Activated naive CD8-positive, alpha-beta T cell treated with anti-CD3 and anti-CD28 coated beads, Interleukin-2, amount 10 ng/mL, durations not matched to agents 7 days and 5 days (primary cell): ENCODE measurements at regions of chr2 and their contacts with region 1.

Region 1: GRCh38 chr2:96536445-96537065 is at the start of gene ARID5A:
- DNase-seq: peak; percentile 90
- ATAC-seq: peak; percentile 58
- H3K4me3 Mint-ChIP-seq: peak within 1 kb of the TSS; percentile 93
- H3K27ac Mint-ChIP-seq: peak within 1 kb of the TSS; percentile 96
- H3K4me1 Mint-ChIP-seq: peaks cover 43% of the 10 kb centered on the region
- H3K27me3 Mint-ChIP-seq: peaks cover 2% of the 10 kb centered on the region
- total RNA-seq, gene ARID5A: 62.1 to 62.8 TPM

Region 2: GRCh38 chr2:96485751-96486651 is 50.6 kb before region 1 on chr2:
- POLR2A ChIA-PET with region 1: interaction called, 13 read pairs
- DNase-seq: peak; percentile 85
- ATAC-seq: peak; percentile 97
- H3K4me3 Mint-ChIP-seq: peak overlapping the region; percentile 96
- H3K27ac Mint-ChIP-seq: peak overlapping the region; percentile 99
- H3K4me1 Mint-ChIP-seq: peaks cover 45% of the 10 kb centered on the region
- H3K27me3 Mint-ChIP-seq: peaks cover 2% of the 10 kb centered on the region

Region 3: DNA sequence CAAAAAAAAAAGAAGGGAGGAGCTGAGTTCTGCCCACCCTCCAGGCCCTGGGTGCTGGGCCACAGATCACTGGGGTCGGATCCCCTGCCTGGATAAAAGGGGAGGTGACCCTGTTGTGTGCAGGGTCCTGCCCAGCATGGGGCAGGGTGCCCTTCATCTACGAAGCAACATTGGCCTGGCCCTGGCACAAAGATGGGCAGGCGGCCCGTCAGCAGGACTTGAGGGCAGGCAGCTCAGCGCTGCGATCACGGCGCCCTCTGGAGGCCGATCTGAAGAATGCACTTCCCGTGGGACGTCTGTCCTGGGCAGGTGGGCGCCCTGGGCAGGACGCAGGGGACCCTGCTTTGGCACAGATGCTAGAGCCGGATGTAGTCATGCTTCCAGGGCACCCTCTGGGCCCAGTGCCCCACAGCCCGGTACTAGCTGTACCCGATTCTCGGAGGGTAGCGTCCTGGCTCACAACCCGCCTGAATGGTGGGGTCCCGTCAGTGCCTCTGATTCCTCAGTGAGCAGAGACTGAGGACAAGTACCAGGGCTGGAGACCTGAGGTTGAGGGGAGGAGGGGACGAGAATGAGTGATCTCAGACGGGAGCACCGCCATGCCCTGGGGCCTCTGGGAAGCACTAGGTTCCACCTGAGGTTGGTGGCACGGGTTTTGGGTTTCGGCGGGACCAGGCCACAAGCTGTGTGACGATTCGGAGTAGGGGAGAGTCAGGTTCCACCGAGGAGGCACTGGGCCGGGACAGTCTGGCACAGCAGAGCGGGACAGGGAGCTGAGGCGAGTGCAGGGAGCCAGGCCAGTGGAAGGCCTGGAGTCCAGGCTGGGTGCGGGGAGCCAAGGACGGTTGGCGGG is 18.0 kb after region 1 on chr2:
- POLR2A ChIA-PET with region 1: interaction called, 35 read pairs
- DNase-seq: peak; percentile 80
- ATAC-seq: peak; percentile 54
- H3K4me3 Mint-ChIP-seq: no peak overlapping the region
- H3K27ac Mint-ChIP-seq: peak overlapping the region; percentile 34
- H3K4me1 Mint-ChIP-seq: peaks cover 8% of the 10 kb centered on the region
- H3K27me3 Mint-ChIP-seq: no peaks in the 10 kb centered on the region

Region 4: GRCh38 chr2:96594691-96595152 is 58.2 kb after region 1 on chr2:
- POLR2A ChIA-PET with region 1: interaction called, 15 read pairs
- DNase-seq: no peak
- ATAC-seq: peak; percentile 96
- H3K4me3 Mint-ChIP-seq: peak overlapping the region; percentile 50
- H3K27ac Mint-ChIP-seq: peak overlapping the region; percentile 88
- H3K4me1 Mint-ChIP-seq: peaks cover 59% of the 10 kb centered on the region
- H3K27me3 Mint-ChIP-seq: no peaks in the 10 kb centered on the region